ENCODE measurements at regions of chr17 and their contacts with region 1.

Region 1: GRCh38 chr17:59311130-59311920 is 20.1 kb upstream of the YPEL2 start:
- DNase-seq: no peak
- ATAC-seq: peak; percentile 88 to 96
- H3K4me3 ChIP-seq: no peak overlapping the region
- H3K27ac ChIP-seq: no peak overlapping the region
- H3K4me1 ChIP-seq: no peaks in the 10 kb centered on the region
- H3K27me3 ChIP-seq: no peaks in the 10 kb centered on the region

Region 2: DNA sequence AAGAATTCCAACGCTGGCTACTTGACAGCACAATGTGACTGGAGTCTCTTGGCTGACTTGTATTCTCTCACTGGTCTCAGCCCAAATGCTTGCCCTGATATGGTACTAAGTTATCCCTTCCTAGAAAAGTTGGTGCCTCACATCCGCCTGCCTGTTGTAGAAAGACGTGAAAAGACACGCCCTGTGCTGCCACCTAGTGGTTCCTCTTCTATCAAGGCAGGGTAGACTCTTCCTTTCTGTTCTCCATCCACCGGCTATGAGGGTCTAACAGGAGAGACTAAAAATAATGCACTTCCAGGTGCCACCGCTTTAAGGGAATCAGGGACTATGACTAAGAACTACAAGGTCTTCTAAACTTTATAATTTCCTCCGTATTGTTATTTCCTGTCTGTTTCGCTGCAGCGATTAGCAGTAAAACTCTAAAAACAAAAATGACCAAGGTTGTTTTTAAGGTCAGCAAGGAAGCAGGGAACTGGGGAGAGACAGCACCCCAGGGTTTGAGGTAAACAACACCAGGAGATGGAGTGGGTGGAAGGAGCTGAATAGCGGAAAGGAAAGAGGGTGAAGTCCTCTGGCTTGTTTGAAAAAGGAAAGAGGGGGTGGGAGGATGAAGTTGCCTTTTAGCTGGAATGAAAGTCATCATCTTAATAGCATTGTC is 129.6 kb after region 1 on chr17:
- intact Hi-C with region 1: loop called in 2 of 4 experiments (anchors 2 to 5 kb)
- DNase-seq: peak; percentile 89 to 95 (median 90)
- ATAC-seq: peak; percentile 92 to 96
- H3K4me3 ChIP-seq: no peak overlapping the region
- H3K27ac ChIP-seq: peak overlapping the region; percentile 89
- H3K4me1 ChIP-seq: peaks cover 2% of the 10 kb centered on the region
- H3K27me3 ChIP-seq: no peaks in the 10 kb centered on the region

Region 3: GRCh38 chr17:59558977-59559376 is 247.7 kb after region 1 on chr17:
- intact Hi-C with region 1: loop called in 2 of 4 experiments (anchors 10 kb)
- DNase-seq: no peak
- ATAC-seq: no peak
- H3K4me3 ChIP-seq: no peak overlapping the region
- H3K27ac ChIP-seq: no peak overlapping the region
- H3K4me1 ChIP-seq: no peaks in the 10 kb centered on the region
- H3K27me3 ChIP-seq: no peaks in the 10 kb centered on the region